PC-3 (cell line): ENCODE measurements at regions of chr5 and their contacts with region 1.

Region 1: DNA sequence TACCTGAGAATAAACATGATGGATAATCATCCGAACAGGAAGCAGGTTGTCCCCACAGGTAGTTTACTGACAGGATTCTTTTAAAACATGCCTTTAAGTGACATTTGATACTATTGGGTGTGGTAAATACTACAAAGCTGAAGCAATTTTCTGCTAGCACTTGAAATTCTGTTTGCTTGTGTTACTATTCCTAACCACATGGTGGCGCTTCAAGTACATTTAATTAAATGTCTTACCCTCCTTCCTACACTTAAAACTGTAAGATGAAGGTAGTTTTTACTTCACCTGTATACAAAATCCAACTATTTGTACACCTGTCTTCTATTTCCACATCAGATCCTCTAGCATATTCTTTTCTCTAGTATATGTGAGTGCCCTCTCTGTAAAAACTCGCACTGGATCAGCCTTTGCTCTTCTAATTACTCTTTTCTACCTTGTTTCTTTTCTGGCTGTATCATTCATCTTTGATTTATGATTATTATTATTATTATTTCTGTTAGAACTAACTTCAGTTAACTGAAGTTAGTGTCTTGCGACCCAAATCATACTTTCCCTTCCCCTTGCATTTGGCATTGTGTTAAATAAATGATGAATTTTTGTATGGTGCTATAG is 18.4 kb downstream of the SLC25A46 start:
- DNase-seq: peak; percentile 84
- ATAC-seq: peak; percentile 41
- H3K4me3 ChIP-seq: no peak overlapping the region
- H3K27ac ChIP-seq: no peak overlapping the region
- H3K4me1 ChIP-seq: peaks cover 5% of the 10 kb centered on the region
- H3K27me3 ChIP-seq: no peaks in the 10 kb centered on the region
- CTCF ChIP-seq: peak; percentile 89

Region 2: DNA sequence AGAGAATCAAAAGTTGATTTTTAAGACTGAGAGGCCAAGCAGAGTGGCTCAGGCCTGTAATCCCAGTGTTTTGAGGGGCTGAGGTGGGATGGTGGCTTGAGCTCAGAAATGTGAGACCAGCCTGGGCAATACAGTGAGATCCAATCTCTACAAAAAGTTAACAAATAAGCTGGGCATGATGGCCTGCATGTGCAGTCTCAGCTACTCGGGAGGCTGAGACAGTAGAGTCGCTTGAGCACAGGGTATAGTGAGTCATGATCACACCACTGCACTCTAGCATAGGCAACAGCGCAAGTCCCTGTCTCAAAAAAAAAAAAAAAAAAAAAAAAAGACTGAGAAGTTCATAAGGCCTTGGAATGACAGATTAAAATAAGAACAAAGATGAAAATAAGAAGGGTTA is 207.9 kb before region 1 on chr5:
- CTCF ChIA-PET with region 1: no interaction called
- POLR2A ChIA-PET with region 1: no interaction called
- intact Hi-C with region 1: no loop called
- DNase-seq: no peak
- ATAC-seq: no peak
- H3K4me3 ChIP-seq: no peak overlapping the region
- H3K27ac ChIP-seq: no peak overlapping the region
- H3K4me1 ChIP-seq: peaks cover 3% of the 10 kb centered on the region; the same call in 1 of the 2 replicates
- H3K27me3 ChIP-seq: no peaks in the 10 kb centered on the region
- CTCF ChIP-seq: no peak

Region 3: GRCh38 chr5:110785326-110785725 is 28.1 kb after region 1 on chr5:
- CTCF ChIA-PET with region 1: interaction called, 3 read pairs
- POLR2A ChIA-PET with region 1: no interaction called
- intact Hi-C with region 1: loop called (anchors 1 kb)
- DNase-seq: peak; percentile 96
- ATAC-seq: peak; percentile 93
- H3K4me3 ChIP-seq: peak overlapping the region; percentile 3; the same call in 1 of the 2 replicates
- H3K27ac ChIP-seq: peak overlapping the region; percentile 92
- H3K4me1 ChIP-seq: peaks cover 22% of the 10 kb centered on the region
- H3K27me3 ChIP-seq: no peaks in the 10 kb centered on the region
- CTCF ChIP-seq: no peak

Region 4: DNA sequence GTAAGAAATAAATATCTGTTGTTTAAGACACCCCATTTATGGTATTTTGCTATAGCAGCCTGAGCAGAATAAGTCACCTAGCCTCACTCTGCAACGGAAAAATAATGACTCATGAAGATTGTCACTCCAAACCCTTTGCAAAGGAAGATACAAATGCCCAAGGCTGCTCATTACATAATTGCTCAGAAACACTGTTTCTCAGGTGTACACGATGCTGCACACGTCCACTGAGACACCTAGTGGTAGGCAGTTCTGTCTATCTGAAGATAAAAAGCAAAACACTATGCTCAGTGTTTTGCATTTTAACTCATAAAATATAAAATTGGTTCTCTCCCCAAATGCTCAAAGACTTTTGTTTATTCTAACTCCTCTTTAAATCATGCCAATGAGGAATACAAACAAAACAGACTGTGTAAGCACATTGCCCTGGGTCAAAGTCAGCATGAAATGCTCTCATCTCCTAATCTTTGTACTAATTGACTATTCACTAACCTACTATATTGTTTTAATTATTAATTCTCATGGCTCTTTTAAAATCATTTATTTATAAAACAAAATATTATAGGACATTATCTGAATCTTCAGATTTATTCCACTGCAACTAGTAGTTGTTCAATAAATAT is 306.6 kb after region 1 on chr5:
- CTCF ChIA-PET with region 1: no interaction called
- POLR2A ChIA-PET with region 1: interaction called, 3 read pairs
- intact Hi-C with region 1: loop called (anchors 1 kb)
- DNase-seq: peak; percentile 93
- ATAC-seq: peak; percentile 83
- H3K4me3 ChIP-seq: no peak overlapping the region
- H3K27ac ChIP-seq: peak overlapping the region; percentile 28; the same call in 1 of the 2 replicates
- H3K4me1 ChIP-seq: peaks cover 33% of the 10 kb centered on the region
- H3K27me3 ChIP-seq: no peaks in the 10 kb centered on the region
- CTCF ChIP-seq: peak; percentile 95

Region 5: DNA sequence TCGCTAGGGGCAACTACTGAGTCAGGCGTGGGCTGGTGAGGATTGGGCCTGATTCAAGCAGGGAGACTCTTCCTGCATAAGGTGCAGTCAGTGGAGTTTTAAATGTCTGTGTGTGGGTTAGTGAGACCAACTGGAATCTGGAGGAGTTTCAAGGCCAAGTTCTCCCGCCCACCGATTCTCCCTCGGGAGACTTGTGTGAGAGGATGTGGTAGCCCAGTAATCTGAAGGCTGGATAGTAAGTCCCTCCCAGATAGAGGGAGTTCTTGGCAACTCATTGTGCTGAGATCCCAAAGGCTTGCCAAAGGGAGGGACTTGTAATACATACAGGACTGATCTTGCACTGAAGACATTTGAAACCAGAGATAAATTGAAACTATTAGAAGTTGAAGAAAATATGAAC is 386.7 kb after region 1 on chr5:
- CTCF ChIA-PET with region 1: no interaction called
- POLR2A ChIA-PET with region 1: no interaction called
- intact Hi-C with region 1: loop called (anchors 1 kb)
- DNase-seq: peak; percentile 43
- ATAC-seq: peak; percentile 61; the same call in 1 of the 2 replicates
- H3K4me3 ChIP-seq: no peak overlapping the region
- H3K27ac ChIP-seq: no peak overlapping the region
- H3K4me1 ChIP-seq: no peaks in the 10 kb centered on the region
- H3K27me3 ChIP-seq: peaks cover 21% of the 10 kb centered on the region; the same call in 1 of the 2 replicates
- CTCF ChIP-seq: no peak